Heart right ventricle (tissue), 16 donors: ENCODE measurements at regions of chr17 and their contacts with region 1.

Region 1: DNA sequence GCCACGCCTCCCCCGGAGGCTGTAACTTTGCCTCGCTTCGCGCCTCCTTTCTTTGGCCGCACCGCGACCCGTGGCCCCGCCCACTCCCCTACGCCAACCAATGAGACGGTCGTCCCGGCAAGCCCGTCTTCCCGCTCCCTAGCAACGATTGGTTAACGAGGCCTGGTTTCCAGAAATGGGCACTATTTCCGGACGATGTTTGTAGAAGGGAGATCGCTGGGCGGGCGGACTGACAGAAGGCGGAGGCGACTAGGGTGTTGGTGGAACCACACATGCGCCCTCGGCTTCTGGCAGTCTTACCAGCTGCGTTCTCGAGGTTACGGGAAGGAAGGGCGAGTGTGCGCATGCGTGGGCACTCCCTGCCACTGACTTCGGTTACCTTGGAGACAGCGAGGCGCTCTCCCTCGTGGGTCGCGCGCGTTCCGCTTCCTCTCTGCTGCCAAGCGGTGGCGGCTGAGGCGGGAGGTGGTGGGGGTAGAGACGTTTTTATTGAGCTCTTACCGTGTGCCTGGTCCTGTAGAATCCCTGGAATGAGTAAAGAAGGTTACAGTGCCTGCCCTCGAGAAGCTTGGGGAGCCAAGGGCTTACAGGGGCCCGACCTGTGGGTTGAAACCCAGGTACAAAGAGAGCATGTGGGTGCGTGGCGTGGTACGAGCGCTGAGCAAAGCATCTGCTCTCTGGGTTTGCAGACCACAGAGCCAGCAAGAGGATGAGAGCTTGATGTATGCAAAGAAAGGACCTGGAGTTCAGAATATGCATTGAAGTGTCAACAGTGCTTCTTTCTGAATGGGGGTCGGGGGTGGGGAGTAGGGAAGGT is 500 bp upstream of the MAP3K14 start:
- DNase-seq: peak; percentile 100
- ATAC-seq: peak; percentile 90 to 97 (median 94)
- H3K4me3 ChIP-seq: peak overlapping the region in 9 of 10 donors; percentile 74 to 95 (median 83)
- H3K27ac ChIP-seq: peak overlapping the region; percentile 65 to 98 (median 96)
- H3K4me1 ChIP-seq: peaks cover 7 to 72% (median 45%) of the 10 kb centered on the region in 9 donors
- H3K27me3 ChIP-seq: no peaks in the 10 kb centered on the region
- CTCF ChIP-seq: peak in 2 of 9 donors; percentile 21 to 23

Region 2: GRCh38 chr17:45148183-45149036 is 168.9 kb before region 1 on chr17 and contains the start of gene HEXIM1:
- intact Hi-C with region 1: loop called in 1 of 10 experiments (anchors 10 kb)
- DNase-seq: peak; percentile 99
- ATAC-seq: peak; percentile 73 to 91 (median 84)
- H3K4me3 ChIP-seq: peak within 1 kb of the TSS; percentile 63 to 97 (median 76)
- H3K27ac ChIP-seq: peak within 1 kb of the TSS; percentile 92 to 99 (median 98)
- H3K4me1 ChIP-seq: peaks cover 11 to 62% (median 54%) of the 10 kb centered on the region in 9 donors
- H3K27me3 ChIP-seq: no peaks in the 10 kb centered on the region
- CTCF ChIP-seq: no peak
- total RNA-seq, gene HEXIM1: 17.0 to 37.4 (median 20.1) TPM

Region 3: DNA sequence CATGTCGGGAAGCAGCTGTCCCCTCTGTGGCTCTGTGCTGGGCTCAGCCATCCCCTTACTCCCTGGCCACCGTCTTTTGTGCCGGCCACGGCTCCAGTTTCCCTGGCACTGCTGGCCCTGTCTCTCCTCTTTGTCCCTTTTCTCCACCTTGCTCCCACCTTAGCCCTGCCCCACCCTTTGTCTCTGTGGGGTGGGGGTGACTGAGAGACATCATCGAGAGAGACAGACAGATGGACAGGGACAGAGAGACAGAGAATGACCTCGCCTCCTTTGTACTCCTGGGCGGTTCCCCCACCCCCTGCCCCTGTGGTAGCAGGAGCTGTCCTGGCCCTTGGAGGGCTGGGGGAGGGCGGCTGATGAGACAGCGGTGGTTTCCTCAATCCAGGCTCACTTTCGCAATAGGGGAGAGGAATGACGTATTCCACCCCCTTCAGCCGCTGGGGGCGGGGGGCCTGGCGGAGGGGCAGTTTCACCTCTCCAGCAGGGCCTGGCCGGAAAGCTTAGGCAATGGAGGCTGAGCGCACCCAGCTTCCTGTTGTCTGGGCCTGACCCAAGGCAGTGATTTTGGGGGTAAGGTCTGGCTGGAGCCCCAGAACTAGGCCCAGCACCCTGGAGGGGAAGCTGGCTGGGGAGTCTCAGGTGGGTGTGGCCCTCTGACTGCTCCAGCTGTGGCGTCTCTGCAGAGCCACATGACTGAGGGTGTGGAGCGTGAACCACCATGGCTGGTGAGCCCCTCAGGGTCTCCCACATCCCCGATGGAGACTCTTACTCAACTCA is 88.4 kb before region 1 on chr17:
- intact Hi-C with region 1: loop called in 1 of 10 experiments (anchors 10 kb)
- DNase-seq: peak; percentile 85 to 87
- ATAC-seq: peak; percentile 61 to 78 (median 74)
- H3K4me3 ChIP-seq: peak overlapping the region in 4 of 10 donors; percentile 5 to 70 (median 6)
- H3K27ac ChIP-seq: peak overlapping the region; percentile 22 to 91 (median 80)
- H3K4me1 ChIP-seq: peaks cover 28 to 84% (median 69%) of the 10 kb centered on the region in 9 donors
- H3K27me3 ChIP-seq: no peaks in the 10 kb centered on the region
- CTCF ChIP-seq: no peak

Region 4: GRCh38 chr17:45277216-45277849 is 40.0 kb before region 1 on chr17:
- intact Hi-C with region 1: loop called in 9 of 10 experiments (anchors 2 to 5 kb)
- DNase-seq: peak; percentile 94
- ATAC-seq: peak; percentile 58 to 85 (median 74)
- H3K4me3 ChIP-seq: peak overlapping the region in 2 of 10 donors; percentile 2 to 5
- H3K27ac ChIP-seq: peak overlapping the region; percentile 27 to 90 (median 80)
- H3K4me1 ChIP-seq: peaks cover 12 to 53% (median 36%) of the 10 kb centered on the region in 9 donors
- H3K27me3 ChIP-seq: no peaks in the 10 kb centered on the region
- CTCF ChIP-seq: peak; percentile 69 to 88 (median 80)

Region 5: GRCh38 chr17:45293413-45294211 is 23.7 kb before region 1 on chr17:
- intact Hi-C with region 1: loop called in 1 of 10 experiments (anchors 1 kb)
- DNase-seq: peak; percentile 74 to 75
- ATAC-seq: peak; percentile 63 to 83 (median 74)
- H3K4me3 ChIP-seq: no peak overlapping the region
- H3K27ac ChIP-seq: peak overlapping the region; percentile 70 to 89 (median 84)
- H3K4me1 ChIP-seq: peaks cover 60 to 100% (median 100%) of the 10 kb centered on the region in 9 donors
- H3K27me3 ChIP-seq: no peaks in the 10 kb centered on the region
- CTCF ChIP-seq: peak in 4 of 9 donors; percentile 10 to 31 (median 18)

Region 6: DNA sequence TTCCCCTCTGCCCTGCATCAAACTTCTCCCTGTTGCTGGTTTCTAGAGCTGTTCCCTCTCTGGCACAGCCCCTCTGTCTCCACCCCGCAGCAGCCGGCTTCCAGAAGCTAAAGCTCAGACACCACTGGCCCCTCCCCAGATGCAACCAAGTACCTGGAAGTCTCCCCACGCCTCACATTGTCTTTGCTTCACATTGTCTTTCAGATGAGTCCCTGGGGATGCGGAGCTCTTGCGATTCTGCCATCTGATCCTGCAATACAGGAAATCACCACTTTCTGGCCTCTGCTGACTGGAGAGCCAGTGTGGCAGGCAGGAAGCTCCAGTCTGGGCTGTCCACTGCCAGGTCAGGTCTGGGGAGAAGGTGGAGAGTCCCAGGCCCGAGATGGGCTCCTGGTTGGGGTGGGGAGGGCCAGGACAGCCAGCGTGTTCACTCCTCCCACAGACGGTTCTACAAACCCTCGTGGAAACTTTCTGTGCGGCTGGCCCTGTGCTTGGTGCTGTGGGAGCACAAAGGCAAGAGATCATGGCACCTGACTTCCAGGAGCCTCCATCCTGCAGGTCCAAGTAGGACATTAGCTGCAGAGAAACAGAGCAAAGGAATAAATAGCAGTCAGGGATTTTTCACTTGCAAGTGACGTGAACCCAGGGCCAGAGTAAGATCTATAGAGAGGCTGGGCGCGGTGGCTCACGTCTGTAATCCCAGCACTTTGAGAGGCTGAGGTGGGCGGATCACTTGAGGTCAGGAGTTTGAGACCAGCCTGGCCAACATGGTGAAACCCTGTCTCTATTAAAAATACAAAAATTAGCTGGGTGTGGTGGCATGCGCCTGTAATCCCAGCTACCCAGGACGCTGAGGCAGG is 47.4 kb after region 1 on chr17:
- intact Hi-C with region 1: loop called in 2 of 10 experiments (anchors 5 kb)
- DNase-seq: peak in 1 of 2 donors; percentile 18
- ATAC-seq: peak in 6 of 8 donors; percentile 45 to 73 (median 55)
- H3K4me3 ChIP-seq: no peak overlapping the region
- H3K27ac ChIP-seq: peak overlapping the region in 1 of 10 donors; percentile 41
- H3K4me1 ChIP-seq: peaks cover 0 to 17% (median 4%) of the 10 kb centered on the region in 9 donors
- H3K27me3 ChIP-seq: no peaks in the 10 kb centered on the region
- CTCF ChIP-seq: no peak

Region 7: GRCh38 chr17:45371414-45372327 is 54.4 kb after region 1 on chr17:
- intact Hi-C with region 1: loop called in 8 of 10 experiments (anchors 1 to 10 kb)
- DNase-seq: peak; percentile 73 to 80
- ATAC-seq: peak; percentile 91 to 96 (median 94)
- H3K4me3 ChIP-seq: peak overlapping the region in 9 of 10 donors; percentile 1 to 46 (median 37)
- H3K27ac ChIP-seq: peak overlapping the region; percentile 57 to 91 (median 81)
- H3K4me1 ChIP-seq: peaks cover 6 to 44% (median 29%) of the 10 kb centered on the region in 9 donors
- H3K27me3 ChIP-seq: peaks cover 0 to 11% (median 0%) of the 10 kb centered on the region in 7 donors
- CTCF ChIP-seq: peak in 2 of 9 donors; percentile 14 to 22